GM10248 (cell line): ENCODE measurements at regions of chr2 and their contacts with region 1.

Region 1: DNA sequence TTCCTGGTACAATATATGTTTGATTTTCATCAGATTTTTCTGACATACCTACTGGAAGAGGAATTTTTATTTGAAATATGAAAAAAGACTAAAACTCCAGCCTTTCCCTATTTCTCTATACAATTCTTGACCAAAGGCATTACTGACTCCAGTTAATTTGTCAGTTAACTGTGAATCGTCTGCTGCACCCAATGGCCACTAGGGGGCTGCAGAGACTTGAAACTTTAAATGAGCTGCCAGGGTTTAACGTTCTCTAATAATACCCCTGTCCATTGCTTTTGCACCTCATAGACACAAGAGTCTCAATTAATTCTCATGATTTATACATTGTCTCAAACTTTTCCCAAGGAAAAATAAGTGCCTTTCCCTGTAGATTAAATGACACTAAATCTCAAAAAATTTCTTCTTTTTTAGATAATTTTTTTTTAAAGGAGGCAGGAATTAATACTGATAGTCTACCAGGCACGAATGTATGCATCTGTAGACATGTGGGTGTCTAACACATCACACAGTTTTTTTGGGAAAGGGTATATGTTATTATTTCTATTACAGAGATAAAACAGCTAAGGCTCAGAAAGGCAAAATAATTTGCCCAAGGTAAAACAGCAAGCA is 1.8 kb upstream of the ALK start:
- DNase-seq: peak; percentile 69
- CTCF ChIP-seq: peak; percentile 91

Region 2: GRCh38 chr2:29796446-29796845 is 126.8 kb before region 1 on chr2:
- CTCF ChIA-PET with region 1: no interaction called
- POLR2A ChIA-PET with region 1: no interaction called
- DNase-seq: no peak
- CTCF ChIP-seq: no peak

Region 3: DNA sequence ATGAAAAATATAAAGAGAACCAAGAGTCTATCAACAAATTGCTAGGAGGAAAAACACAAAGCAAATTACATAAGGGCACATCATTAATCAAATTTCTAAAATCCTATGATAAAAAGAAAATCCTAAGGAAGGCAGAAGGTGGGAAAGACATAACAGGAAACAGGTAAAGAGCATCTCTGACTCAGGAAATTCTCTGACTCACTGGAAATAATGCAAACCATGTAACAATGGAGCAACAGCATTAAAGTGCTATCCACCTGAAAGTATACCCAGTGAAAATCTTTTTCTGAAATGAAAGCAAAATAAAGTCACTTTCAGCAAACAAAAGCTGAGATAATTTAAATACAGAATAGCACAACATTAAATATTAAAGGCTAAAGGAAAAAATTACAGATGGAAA is 12.8 kb before region 1 on chr2:
- CTCF ChIA-PET with region 1: interaction called, 47 read pairs
- POLR2A ChIA-PET with region 1: no interaction called
- DNase-seq: no peak
- CTCF ChIP-seq: no peak

Region 4: GRCh38 chr2:29942711-29943110 is 19.5 kb after region 1 on chr2:
- CTCF ChIA-PET with region 1: interaction called, 13 read pairs
- POLR2A ChIA-PET with region 1: no interaction called
- DNase-seq: no peak
- CTCF ChIP-seq: no peak

Region 5: GRCh38 chr2:30022444-30023071 is 99.3 kb after region 1 on chr2:
- CTCF ChIA-PET with region 1: interaction called, 22 read pairs
- POLR2A ChIA-PET with region 1: no interaction called
- DNase-seq: peak; percentile 23
- CTCF ChIP-seq: no peak

Region 6: DNA sequence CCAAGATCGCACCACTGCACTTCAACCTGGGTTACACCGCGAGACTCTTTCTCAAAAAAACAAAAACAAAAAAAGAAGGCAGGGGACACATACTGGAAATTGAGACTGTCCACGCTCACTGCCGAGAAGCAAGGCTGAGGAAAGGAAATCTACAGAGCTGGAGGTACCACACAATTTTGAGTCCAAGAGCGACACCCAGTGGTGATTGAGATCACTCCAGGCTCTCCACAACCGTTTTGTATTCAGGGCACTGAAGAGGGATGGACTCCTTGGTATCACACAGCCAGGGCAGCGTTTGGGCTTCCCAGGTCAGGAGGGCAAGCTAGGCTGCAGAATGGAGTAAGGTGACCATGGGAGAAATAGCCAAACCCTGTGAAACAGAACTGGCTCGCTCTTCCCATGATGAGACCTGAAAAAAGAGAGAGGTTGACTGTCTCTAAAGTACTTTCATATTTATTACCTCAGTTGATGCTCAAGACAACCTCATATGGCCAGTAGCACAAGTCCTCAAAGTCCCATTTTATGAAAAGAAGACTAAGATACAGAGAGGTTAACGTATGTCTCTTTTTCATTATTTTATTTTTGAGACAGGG is 149.1 kb after region 1 on chr2:
- CTCF ChIA-PET with region 1: interaction called, 71 read pairs
- POLR2A ChIA-PET with region 1: no interaction called
- DNase-seq: peak; percentile 71
- CTCF ChIP-seq: peak; percentile 74